Right cardiac atrium (tissue), 5 donors: ENCODE measurements at regions of chr1 and their contacts with region 1.

Region 1: DNA sequence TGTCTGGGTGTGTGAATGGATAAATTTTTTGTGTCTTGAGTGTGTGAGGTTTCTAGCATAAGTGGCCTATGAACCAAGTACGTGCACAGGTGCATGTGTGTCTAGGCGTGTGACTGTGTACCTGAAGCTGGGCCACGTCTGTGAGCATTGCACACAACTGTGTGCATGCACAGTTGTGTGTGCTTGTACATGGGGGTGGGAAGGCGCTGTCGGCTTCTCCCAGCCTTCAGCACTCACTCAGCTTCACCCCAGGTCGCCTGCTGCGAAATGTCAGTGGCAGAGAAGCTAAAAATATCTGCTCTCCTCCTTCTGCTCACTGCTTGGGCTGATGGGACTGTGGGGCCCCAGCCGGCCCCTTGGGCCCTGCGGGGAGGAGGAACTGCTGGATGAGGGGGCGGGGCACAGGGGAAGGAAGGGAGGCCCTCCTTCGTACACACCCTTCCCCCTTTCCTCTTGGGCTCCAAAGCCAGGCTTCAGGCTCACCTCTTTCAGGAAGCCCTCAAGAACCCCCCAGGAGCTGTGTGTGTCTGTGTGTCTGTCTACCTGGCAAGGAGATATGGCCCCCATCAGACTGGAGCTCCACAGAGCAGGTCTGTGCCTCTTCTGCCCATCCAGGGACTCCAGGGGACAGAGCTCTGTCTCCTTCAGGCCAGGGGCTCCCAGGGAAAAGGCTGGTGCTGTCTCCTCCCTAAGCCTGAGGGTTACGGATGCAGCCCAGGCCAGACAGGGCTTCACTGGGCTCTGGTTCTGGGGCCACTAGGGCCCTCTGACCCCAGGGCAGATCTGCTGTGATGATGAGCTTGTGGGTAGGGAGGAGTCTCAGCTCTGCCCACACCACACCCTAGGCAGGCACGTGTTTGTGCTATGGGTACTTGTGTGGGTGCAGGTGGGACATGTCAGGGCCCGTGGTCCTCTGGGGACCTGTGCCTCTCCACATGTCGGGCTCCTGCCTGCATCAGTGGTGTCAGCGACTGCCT is 35.6 kb upstream of the WASF2 start:
- DNase-seq: peak; percentile 83 to 95 (median 92)
- ATAC-seq: peak; percentile 69 to 75
- H3K4me3 ChIP-seq: peak overlapping the region; percentile 0
- H3K27ac ChIP-seq: peak overlapping the region; percentile 84
- H3K4me1 ChIP-seq: peaks cover 58% of the 10 kb centered on the region
- H3K27me3 ChIP-seq: no peaks in the 10 kb centered on the region

Region 2: DNA sequence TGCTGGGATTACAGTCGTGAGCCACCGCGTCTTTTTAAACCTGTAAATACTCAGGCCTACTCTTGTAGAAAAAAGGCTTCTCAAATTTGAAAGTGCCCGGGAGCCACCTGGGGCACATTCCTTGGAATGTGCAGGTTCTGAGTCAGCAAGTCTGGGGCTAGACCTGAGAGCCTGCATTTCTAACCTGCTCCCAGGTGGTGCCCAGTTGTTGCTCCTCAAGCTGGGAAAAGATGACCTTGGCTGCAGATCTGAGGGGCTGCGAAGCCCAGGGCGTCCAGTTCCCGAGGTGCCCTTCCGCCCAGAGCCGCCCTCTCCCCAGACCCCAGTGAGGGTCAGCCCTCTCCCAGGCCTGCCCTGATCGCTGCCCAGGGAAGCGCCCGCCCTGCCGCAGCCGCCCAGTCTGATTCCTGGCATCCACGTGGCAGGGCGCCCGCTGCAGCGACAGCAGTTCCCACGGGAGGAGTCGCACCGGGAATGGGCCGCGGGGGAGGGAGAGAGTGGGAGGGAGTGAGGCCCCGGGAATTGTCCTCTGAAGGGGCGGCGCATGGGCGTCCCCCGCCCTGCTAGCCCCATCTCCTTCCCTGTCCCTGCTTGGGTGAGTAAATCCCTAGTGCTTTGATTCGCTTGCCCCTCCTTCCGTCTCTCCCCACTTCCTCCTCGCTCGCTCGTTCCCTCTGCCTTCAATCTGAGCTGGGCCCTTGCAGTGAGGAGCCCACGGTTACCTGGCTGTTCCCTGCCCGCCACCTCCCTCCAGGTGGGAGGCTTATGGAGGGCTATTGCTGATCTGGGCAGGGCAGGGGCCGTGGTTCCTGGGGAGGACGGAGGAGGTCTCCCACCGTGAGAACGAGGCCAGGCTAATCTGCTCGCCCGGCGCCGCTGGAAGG is 494.1 kb before region 1 on chr1:
- intact Hi-C with region 1: loop called in 1 of 4 experiments (anchors 10 kb)
- DNase-seq: peak; percentile 87 to 92 (median 92)
- ATAC-seq: peak; percentile 88 to 94
- H3K4me3 ChIP-seq: peak overlapping the region; percentile 1
- H3K27ac ChIP-seq: peak overlapping the region; percentile 5
- H3K4me1 ChIP-seq: no peaks in the 10 kb centered on the region
- H3K27me3 ChIP-seq: no peaks in the 10 kb centered on the region

Region 3: DNA sequence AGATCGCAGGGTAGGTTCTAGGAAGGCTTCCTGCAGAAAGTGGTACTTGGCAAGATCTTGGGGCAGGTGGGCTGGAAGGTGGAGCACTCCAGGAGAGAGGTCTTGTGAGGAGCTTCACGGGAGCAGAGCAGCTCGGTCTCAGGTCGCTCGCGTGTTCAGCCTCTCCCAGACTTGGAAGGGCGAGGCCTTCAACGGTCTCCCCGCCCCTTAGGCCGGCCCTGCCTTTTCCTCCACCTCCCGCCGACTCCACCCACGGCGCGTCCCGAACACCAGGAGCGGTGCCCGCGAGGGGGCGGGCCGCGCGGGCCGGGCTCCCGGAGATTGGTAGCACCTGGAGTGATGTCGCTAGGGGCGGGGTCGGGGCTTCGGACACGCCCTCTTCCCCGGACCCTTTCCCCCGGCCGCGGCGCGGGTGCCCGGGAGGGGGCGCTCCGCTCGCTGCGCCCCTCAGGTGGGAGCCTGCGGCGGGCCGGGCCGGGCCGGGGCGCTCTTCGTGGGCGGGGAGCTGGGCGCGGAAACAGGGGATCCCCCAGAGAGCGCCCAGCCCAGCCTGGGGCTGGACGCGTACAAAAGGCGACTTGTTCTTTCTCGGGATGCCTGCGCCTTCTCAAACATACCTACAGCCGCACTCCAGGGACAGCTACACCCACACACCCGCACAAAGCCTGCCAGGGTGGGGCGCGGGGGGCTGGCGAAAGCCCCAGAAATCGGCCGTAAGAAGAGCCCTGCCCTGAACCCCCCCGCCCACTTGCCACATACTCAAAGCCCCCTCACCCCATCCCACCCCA is 42.9 kb after region 1 on chr1:
- intact Hi-C with region 1: loop called in 1 of 4 experiments (anchors 5 kb)
- DNase-seq: peak; percentile 95 to 98 (median 98)
- ATAC-seq: peak; percentile 86 to 88
- H3K4me3 ChIP-seq: no peak overlapping the region
- H3K27ac ChIP-seq: peak overlapping the region; percentile 85
- H3K4me1 ChIP-seq: peaks cover 71% of the 10 kb centered on the region
- H3K27me3 ChIP-seq: no peaks in the 10 kb centered on the region